Activated CD4-positive, alpha-beta T cell treated with anti-CD3 and anti-CD28 coated beads, Interleukin-2, amount 10 ng/mL, durations not matched to agents 24 days and 14 days (primary cell): ENCODE measurements at regions of chr15 and their contacts with region 1.

Region 1: DNA sequence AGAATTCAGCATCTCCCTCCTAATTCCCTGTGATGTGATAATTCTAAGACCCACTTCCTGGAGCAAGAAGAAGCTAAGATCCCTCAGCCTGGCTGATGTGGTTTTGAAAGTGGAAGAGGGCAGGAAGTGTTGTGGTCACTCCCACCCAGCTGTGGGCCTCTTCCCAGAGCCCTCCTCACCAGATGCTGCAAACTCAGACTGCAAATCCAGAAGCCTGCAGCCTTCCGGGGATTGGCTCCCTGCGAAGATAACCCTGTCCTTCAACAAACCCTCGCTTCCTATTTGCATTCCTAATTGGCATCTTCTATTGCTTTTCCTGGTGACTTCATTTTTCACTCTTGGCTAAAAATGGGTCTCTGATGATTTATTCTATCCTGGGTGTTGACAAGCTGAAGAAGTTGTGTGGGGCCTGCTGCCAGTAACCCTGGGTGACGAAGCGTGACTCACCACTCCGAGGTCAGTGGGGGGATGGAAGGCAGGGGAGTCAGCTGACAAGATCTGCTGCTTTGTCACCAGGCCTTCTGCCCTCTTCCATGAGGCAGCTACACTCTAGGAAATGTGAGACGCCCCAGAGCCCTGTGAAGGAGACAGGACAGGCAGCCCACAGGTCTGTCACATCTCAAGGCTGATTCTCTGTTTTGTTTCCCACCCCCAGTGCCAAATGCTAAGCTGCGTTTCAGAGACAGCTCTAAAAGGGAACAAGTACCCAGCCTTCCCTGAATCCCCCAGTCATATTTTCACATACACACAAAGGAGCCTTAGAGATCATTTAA is 99.7 kb upstream of the LIPC start:
- DNase-seq: peak; percentile 94
- H3K4me3 Mint-ChIP-seq: peak overlapping the region; percentile 61
- H3K27ac Mint-ChIP-seq: peak overlapping the region; percentile 98
- H3K4me1 Mint-ChIP-seq: peaks cover 49% of the 10 kb centered on the region
- H3K27me3 Mint-ChIP-seq: no peaks in the 10 kb centered on the region

Region 2: DNA sequence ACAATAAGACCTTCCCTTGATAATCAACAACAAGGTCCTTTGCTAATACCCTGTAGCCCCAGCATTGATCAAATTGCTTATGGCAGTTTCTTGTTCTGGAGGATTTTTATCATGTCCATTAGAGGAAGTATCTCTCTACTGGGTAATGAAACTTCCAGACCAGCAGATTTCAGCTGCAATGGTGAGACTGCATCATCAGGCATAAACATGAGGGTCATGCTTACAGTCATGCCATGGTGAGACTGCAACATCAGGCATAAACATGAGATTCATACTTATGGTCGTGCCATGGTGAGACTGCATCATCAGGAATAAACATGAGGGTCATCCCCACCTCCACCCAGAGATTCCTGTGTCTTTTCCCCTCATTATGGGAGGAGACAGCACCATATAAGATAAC is 29.3 kb before region 1 on chr15:
- intact Hi-C with region 1: no loop called
- DNase-seq: no peak
- H3K4me3 Mint-ChIP-seq: no peak overlapping the region
- H3K27ac Mint-ChIP-seq: no peak overlapping the region
- H3K4me1 Mint-ChIP-seq: peaks cover 27% of the 10 kb centered on the region
- H3K27me3 Mint-ChIP-seq: no peaks in the 10 kb centered on the region

Region 3: DNA sequence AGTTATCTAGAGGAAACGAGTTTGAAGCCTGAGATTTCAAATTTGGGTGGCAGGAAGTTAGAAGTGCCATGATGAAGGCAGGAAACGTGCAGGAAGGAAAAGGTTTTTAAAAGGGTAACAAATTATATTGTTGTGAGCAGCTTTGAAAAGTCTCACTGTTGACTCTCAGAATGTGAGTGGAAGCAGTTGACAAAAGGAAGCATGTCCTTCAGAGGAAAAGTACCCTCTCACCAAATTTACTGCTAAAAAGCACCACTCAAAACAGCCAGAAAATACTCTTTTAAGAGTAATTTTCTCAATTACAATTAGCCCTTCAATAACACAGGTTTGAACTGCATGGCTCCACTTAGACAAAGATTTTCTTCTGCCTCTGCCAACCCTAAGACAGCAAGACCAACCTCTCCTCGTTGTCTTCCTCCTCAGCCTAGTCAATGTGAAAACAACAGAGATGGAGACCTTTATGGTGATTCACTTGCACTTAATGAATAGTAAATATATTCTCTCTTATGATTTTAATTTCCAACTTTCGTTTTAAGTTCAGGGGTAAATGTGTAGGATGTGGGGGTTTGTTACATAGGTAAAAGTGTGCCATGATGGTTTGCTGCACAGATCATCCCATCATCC is 17.4 kb before region 1 on chr15:
- intact Hi-C with region 1: loop called (anchors 2 kb)
- DNase-seq: peak; percentile 63
- H3K4me3 Mint-ChIP-seq: peak overlapping the region; percentile 7
- H3K27ac Mint-ChIP-seq: peak overlapping the region; percentile 82
- H3K4me1 Mint-ChIP-seq: peaks cover 23% of the 10 kb centered on the region
- H3K27me3 Mint-ChIP-seq: no peaks in the 10 kb centered on the region

Region 4: GRCh38 chr15:58357521-58358476 is 25.7 kb after region 1 on chr15:
- intact Hi-C with region 1: loop called (anchors 1 kb)
- DNase-seq: peak; percentile 83
- H3K4me3 Mint-ChIP-seq: peak overlapping the region; percentile 16
- H3K27ac Mint-ChIP-seq: peak overlapping the region; percentile 87
- H3K4me1 Mint-ChIP-seq: peaks cover 45% of the 10 kb centered on the region
- H3K27me3 Mint-ChIP-seq: no peaks in the 10 kb centered on the region

Region 5: GRCh38 chr15:58510715-58511598 is 178.9 kb after region 1 on chr15:
- intact Hi-C with region 1: no loop called
- DNase-seq: no peak
- H3K4me3 Mint-ChIP-seq: no peak overlapping the region
- H3K27ac Mint-ChIP-seq: no peak overlapping the region
- H3K4me1 Mint-ChIP-seq: peaks cover 28% of the 10 kb centered on the region
- H3K27me3 Mint-ChIP-seq: no peaks in the 10 kb centered on the region

Region 6: DNA sequence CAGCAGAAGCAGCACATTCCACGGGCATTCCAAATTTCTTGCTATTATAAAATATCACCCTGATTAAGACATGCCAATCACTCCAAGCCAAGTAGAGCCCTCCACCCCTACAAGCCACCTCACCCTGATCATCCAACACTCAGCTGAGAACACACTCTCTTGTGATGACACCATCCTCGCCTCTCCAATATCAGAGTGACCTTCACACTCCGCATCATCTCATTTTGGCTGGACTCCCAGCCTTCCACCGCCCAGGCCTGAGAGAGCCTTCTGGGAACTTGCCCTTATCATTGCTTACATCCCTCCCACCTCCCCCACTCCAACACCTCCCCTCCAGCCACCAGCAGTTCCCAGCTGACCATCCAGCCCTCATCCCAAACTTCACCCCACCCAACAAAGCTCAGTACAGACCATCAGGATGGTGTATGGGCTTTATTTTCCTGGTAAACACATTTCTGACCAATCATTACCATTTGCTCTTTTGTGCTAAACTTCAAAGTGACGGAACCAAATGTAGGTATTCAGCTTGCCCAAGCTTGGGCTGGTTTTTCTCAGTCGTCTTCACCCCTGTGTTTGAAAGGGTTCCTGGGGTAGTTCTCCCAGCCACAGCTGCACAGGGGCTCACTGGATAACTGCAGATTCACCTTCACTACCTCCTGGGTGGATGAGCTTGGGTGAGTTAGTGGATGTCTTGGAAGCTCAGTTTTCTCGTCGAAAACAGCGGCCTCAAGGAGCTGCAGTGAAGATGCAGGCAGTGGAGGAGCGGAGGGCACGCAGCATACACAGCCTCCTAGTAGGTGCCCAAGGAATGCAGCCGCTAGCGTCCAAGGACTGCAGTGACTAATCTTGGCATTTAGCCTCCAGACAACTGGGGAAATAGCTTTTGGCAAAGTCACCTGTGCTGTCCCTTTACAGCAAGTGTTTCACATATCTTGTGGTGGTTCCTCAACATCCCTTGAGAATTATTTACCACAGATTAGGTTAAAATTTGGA is 214.8 kb after region 1 on chr15:
- intact Hi-C with region 1: loop called (anchors 2 kb)
- DNase-seq: no peak
- H3K4me3 Mint-ChIP-seq: peak overlapping the region; percentile 25
- H3K27ac Mint-ChIP-seq: peak overlapping the region; percentile 97
- H3K4me1 Mint-ChIP-seq: peaks cover 60% of the 10 kb centered on the region
- H3K27me3 Mint-ChIP-seq: no peaks in the 10 kb centered on the region

Region 7: GRCh38 chr15:58933281-58934113 is 601.4 kb after region 1 on chr15 and contains the start of gene SLTM:
- intact Hi-C with region 1: loop called (anchors 2 kb)
- DNase-seq: peak; percentile 96
- H3K4me3 Mint-ChIP-seq: peak within 1 kb of the TSS; percentile 98
- H3K27ac Mint-ChIP-seq: peak within 1 kb of the TSS; percentile 100
- H3K4me1 Mint-ChIP-seq: peaks cover 21% of the 10 kb centered on the region
- H3K27me3 Mint-ChIP-seq: peaks cover 1% of the 10 kb centered on the region
- total RNA-seq, gene SLTM: 126 and 127 TPM in 2 replicates